Right ventricle myocardium inferior (tissue), 1 donor: ENCODE measurements at regions of chr7 and their contacts with region 1.

Region 1: DNA sequence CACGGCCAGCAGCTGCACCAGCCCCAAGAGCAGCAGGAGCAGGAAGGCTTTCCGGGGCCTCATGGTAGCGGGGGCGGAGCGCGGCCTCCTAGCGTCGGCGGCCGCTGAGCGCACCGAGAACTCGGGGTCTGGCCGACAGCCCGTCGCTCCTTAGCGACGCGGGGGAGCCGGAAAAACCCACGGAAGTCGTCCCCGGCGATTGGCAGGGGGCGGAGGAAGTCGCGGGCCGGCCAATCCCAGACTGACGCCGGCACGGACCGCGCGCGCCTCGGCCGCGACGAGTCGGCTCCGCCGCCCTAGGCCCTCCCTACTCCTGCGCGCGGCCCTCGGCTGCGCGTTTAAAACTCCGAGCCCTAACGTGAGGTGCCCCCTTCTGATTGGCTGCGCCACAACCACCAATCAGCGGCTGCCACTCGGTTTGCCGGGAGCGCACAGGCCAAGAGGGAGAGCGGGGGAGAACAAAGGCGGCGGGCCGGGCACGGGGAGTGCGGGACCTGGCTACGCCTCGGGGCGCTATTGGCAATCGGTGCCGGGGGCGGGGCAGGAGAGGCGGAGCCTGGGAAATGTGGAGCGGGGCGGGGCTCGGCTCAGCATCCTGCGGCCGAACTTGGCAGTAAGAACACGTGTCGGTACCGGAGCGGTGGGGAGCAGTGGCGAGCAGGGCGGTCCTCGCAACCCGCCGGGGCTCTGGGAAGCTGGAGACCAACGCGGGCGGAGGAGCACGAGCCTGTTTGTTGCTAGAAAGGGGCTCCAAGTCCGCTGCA is at the start of gene PDIA4:
- DNase-seq: peak; percentile 100
- ATAC-seq: peak; percentile 98
- total RNA-seq, gene PDIA4: 48.7 TPM

Region 2: GRCh38 chr7:148972375-148972774 is 56.2 kb before region 1 on chr7:
- intact Hi-C with region 1: no loop called
- DNase-seq: no peak
- ATAC-seq: peak; percentile 37

Region 3: GRCh38 chr7:148987010-148987750 is 41.3 kb before region 1 on chr7:
- intact Hi-C with region 1: loop called (anchors 1 kb)
- DNase-seq: peak; percentile 88
- ATAC-seq: peak; percentile 93

Region 4: DNA sequence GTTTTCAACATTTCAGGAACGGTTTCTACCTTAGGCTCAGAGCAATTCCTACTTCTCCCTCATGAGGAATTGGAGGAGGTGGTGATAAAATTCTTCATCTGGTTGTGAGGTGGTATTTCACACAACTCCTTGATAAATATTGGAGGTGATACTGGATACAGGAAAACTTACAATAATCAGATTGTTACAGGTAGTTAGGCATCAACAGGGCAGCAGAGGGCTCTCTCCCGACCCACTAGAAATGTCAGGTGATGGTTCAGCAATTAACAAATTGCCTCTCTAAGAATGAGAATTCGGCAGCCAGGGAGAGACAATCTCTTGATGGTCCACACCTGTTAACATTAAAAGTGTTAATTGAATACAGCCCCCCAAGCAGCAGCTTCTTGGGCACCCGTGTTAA is 39.3 kb after region 1 on chr7:
- intact Hi-C with region 1: loop called (anchors 1 kb)
- DNase-seq: no peak
- ATAC-seq: no peak

Region 5: GRCh38 chr7:149090397-149091195 is 62.1 kb after region 1 on chr7 and contains the start of gene ZNF786:
- intact Hi-C with region 1: loop called (anchors 1 kb)
- DNase-seq: peak; percentile 93
- ATAC-seq: peak; percentile 97
- total RNA-seq, gene ZNF786: 2.9 TPM

Region 6: GRCh38 chr7:149125863-149126661 is 97.5 kb after region 1 on chr7 and contains the start of gene ZNF425:
- intact Hi-C with region 1: loop called (anchors 2 kb)
- DNase-seq: peak; percentile 96
- ATAC-seq: peak; percentile 97
- total RNA-seq, gene ZNF425: 0.60 TPM

Region 7: GRCh38 chr7:149261829-149262617 is 233.5 kb after region 1 on chr7 and contains the start of gene ZNF783:
- intact Hi-C with region 1: no loop called
- DNase-seq: peak; percentile 94
- ATAC-seq: peak; percentile 97
- total RNA-seq, gene ZNF783: 4.3 TPM